Mammary epithelial cell (primary cell): ENCODE measurements at regions of chr13 and their contacts with region 1.

Region 1: DNA sequence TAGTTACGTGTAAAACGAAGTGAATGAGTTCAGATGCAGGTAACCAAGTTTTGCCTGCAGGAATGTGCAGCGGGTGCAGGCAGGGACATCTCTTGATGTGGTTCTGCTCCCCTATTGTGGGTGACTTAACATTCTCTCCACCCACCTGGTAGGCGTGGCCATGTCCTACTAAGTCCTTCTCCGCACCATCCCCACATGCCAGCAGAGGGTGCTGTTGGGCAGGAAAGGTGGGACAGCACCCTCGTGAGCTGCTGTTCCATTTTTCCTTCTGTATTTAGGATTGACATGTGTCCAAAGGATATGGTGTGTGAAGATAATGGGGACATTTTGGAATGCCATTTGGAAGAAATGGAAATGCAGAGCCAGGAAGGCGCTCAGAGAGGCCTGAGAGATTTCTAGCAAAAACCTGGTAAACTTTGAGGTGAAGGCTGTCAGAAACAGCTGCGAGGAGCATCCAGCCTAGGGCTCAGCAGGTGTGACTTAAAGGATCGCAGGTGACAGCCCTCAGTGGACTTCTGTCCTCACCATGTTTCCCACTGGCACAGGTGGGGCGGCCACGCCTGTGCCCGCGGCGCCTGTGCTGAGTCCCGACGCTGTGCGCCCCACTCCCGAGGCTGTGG is 26.2 kb upstream of the MCF2L start:
- DNase-seq: peak; percentile 84
- H3K4me3 ChIP-seq: peak overlapping the region; percentile 43 to 52 (median 49)
- H3K27ac ChIP-seq: no peak overlapping the region
- H3K4me1 ChIP-seq: peaks cover 20% of the 10 kb centered on the region
- H3K27me3 ChIP-seq: peaks cover 4% of the 10 kb centered on the region
- CTCF ChIP-seq: peak; percentile 97 to 99

Region 2: GRCh38 chr13:111993691-111994090 is 949.1 kb before region 1 on chr13:
- CTCF ChIA-PET with region 1: no interaction called
- dilution Hi-C with region 1: no loop called
- in situ Hi-C with region 1: no loop called
- intact Hi-C with region 1: no loop called
- DNase-seq: no peak
- H3K4me3 ChIP-seq: no peak overlapping the region
- H3K27ac ChIP-seq: no peak overlapping the region
- H3K4me1 ChIP-seq: no peaks in the 10 kb centered on the region
- H3K27me3 ChIP-seq: no peaks in the 10 kb centered on the region
- CTCF ChIP-seq: no peak

Region 3: GRCh38 chr13:113029487-113030258 is 86.9 kb after region 1 on chr13:
- CTCF ChIA-PET with region 1: interaction called, 3 read pairs
- dilution Hi-C with region 1: no loop called
- in situ Hi-C with region 1: no loop called
- intact Hi-C with region 1: loop called (anchors 1 kb)
- DNase-seq: no peak
- H3K4me3 ChIP-seq: no peak overlapping the region
- H3K27ac ChIP-seq: no peak overlapping the region
- H3K4me1 ChIP-seq: no peaks in the 10 kb centered on the region
- H3K27me3 ChIP-seq: no peaks in the 10 kb centered on the region
- CTCF ChIP-seq: peak; percentile 45 to 74

Region 4: GRCh38 chr13:113153810-113154748 is 211.3 kb after region 1 on chr13:
- CTCF ChIA-PET with region 1: no interaction called
- dilution Hi-C with region 1: no loop called
- in situ Hi-C with region 1: no loop called
- intact Hi-C with region 1: loop called (anchors 5 kb)
- DNase-seq: peak; percentile 29
- H3K4me3 ChIP-seq: peak overlapping the region; percentile 41 to 55 (median 48)
- H3K27ac ChIP-seq: no peak overlapping the region
- H3K4me1 ChIP-seq: peaks cover 9% of the 10 kb centered on the region
- H3K27me3 ChIP-seq: peaks cover 2% of the 10 kb centered on the region
- CTCF ChIP-seq: no peak

Region 5: GRCh38 chr13:113208424-113209335 is 265.9 kb after region 1 on chr13 and contains the start of gene PCID2:
- CTCF ChIA-PET with region 1: no interaction called
- dilution Hi-C with region 1: no loop called
- in situ Hi-C with region 1: no loop called
- intact Hi-C with region 1: loop called (anchors 5 kb)
- DNase-seq: peak; percentile 88
- H3K4me3 ChIP-seq: peak within 1 kb of the TSS; percentile 74 to 93 (median 87)
- H3K27ac ChIP-seq: peak within 1 kb of the TSS; percentile 94
- H3K4me1 ChIP-seq: peaks cover 16% of the 10 kb centered on the region
- H3K27me3 ChIP-seq: no peaks in the 10 kb centered on the region
- CTCF ChIP-seq: peak in 1 of 2 donors; percentile 9
- total RNA-seq, gene PCID2: 34.7 to 42.0 TPM

Region 6: DNA sequence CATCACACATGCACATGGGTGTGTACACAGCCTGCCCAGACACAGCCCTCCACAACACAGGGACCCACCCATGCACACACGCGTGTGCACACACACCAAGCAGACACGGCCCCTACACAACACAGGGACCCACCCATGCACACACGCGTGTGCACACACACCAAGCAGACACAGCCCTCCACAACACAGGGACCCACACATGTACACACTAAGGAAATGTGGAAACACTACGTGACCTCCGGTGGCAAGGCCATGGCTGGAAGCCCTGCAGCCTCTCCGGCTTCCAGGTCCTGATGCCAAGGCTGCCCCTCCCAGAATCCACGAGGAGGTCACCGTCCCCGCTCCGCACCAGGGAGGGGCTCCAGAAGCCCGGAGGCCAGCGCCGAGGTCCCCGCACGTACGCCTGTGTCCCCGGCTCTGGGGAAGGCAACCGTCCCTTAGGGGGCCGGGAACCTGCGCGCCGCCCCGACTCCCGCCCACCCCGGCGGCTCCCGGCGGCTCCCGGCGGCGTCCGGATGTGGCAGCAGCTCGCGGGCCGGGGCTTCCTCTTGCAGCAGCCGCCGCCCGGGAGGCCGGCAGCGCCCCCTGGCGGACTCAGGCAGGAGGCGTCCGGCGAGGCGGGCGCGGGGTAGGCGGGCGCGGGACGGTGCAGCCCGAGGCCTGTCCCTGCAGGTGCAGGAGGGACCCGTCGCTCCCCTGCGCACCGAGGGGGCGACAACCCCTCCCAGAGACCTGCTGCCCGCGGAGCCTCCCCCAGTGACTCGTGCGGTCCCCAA is 451.0 kb after region 1 on chr13:
- CTCF ChIA-PET with region 1: no interaction called
- dilution Hi-C with region 1: no loop called
- in situ Hi-C with region 1: loop called (anchors 10 kb)
- intact Hi-C with region 1: loop called (anchors 1 kb)
- DNase-seq: peak; percentile 54
- H3K4me3 ChIP-seq: peak overlapping the region; percentile 39 to 58 (median 57)
- H3K27ac ChIP-seq: no peak overlapping the region
- H3K4me1 ChIP-seq: peaks cover 12% of the 10 kb centered on the region
- H3K27me3 ChIP-seq: peaks cover under 1% of the 10 kb centered on the region
- CTCF ChIP-seq: peak; percentile 45 to 62